ENCODE measurements at regions of chr16 and their contacts with region 1.

Region 1: GRCh38 chr16:49407873-49408550 is 34.4 kb downstream of the C16orf78 start:
- DNase-seq: peak; percentile 81 to 90 (median 87)
- ATAC-seq: peak; percentile 95 to 99 (median 98)
- H3K4me3 ChIP-seq: no peak overlapping the region
- H3K27ac ChIP-seq: no peak overlapping the region
- H3K4me1 ChIP-seq: peaks cover 0 to 7% (median 0%) of the 10 kb centered on the region in 12 donors
- H3K27me3 ChIP-seq: no peaks in the 10 kb centered on the region
- CTCF ChIP-seq: peak; percentile 85 to 94 (median 91)
- POLR2A ChIP-seq: no peak

Region 2: GRCh38 chr16:49424961-49425360 is 16.9 kb after region 1 on chr16:
- intact Hi-C with region 1: loop called in 1 of 10 experiments (anchors 2 kb)
- DNase-seq: no peak
- ATAC-seq: no peak
- H3K4me3 ChIP-seq: no peak overlapping the region
- H3K27ac ChIP-seq: no peak overlapping the region
- H3K4me1 ChIP-seq: peaks cover 0 to 9% (median 0%) of the 10 kb centered on the region in 12 donors
- H3K27me3 ChIP-seq: peaks cover 0 to 3% (median 0%) of the 10 kb centered on the region in 9 donors
- CTCF ChIP-seq: no peak
- POLR2A ChIP-seq: no peak

Region 3: GRCh38 chr16:49464877-49465504 is 57.0 kb after region 1 on chr16:
- intact Hi-C with region 1: no loop called
- DNase-seq: peak in 2 of 5 donors; percentile 14 to 22
- ATAC-seq: peak in 3 of 4 donors; percentile 16 to 43 (median 39)
- H3K4me3 ChIP-seq: no peak overlapping the region
- H3K27ac ChIP-seq: no peak overlapping the region
- H3K4me1 ChIP-seq: no peaks in the 10 kb centered on the region
- H3K27me3 ChIP-seq: peaks cover 0 to 40% (median 10%) of the 10 kb centered on the region in 9 donors
- CTCF ChIP-seq: peak in 11 of 12 donors; percentile 20 to 52 (median 43)
- POLR2A ChIP-seq: no peak

Region 4: DNA sequence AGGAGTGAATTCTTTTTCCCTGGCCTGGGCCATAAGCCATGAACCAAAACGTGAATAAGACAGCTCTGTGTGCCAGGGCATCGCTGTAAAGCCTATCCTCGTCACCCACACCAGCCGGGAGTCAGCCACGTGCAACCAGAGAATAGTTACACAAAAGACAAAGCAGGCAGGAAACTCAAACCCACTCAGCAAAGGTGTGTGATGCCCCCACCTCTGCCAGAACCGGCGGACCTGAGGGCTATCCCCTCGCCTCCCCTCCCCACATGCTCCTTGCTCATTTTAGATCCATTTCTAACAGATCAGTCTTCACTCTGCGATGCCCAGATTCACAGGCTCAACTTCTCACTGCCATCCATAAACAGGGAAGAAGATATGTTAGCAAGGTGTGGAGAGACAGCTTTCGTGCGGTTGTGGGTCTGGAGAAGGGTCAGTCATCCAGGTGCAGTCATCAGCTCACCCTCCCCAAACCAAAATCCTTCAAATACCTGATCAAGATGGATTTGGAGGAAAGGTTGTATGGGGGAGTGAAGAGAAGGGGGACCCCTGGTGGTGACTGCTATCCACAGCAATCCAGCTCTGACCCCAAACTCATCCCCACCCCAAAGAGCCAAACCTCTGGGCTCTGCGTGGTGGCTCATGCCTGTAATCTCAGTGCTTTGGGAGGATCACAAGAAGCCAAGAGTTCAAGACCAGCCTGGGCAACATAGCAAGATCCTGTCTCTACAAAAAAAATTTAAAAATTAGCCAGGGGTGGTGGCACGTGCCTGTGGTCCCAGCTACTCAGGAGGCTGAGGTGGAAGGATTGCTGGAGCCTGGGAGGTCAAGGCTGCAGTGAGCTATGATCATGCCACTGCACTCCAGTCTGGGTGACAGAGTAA is 184.8 kb after region 1 on chr16:
- intact Hi-C with region 1: loop called (anchors 2 to 5 kb)
- DNase-seq: peak in 1 of 5 donors; percentile 28
- ATAC-seq: peak in 3 of 4 donors; percentile 49 to 58 (median 56)
- H3K4me3 ChIP-seq: no peak overlapping the region
- H3K27ac ChIP-seq: no peak overlapping the region
- H3K4me1 ChIP-seq: peaks cover 0 to 28% (median 11%) of the 10 kb centered on the region in 12 donors
- H3K27me3 ChIP-seq: peaks cover 0 to 2% (median 0%) of the 10 kb centered on the region in 9 donors
- CTCF ChIP-seq: peak; percentile 63 to 84 (median 75)
- POLR2A ChIP-seq: no peak

Region 5: DNA sequence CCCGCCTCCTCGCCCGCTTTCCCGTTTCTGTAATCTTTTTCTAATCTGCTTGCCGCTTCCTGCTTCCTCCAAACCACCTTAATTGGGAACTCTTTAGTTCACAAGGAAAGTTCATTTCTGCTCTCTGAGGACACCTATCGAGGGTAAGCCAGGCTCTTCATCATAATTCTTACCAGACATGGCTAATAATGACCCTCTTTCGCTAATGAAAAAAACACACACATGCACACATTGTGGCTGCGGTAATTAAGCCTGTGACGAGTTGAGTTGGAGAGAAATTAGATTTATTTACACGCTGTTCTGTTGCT is 347.3 kb after region 1 on chr16:
- intact Hi-C with region 1: loop called in 1 of 10 experiments (anchors 5 kb)
- DNase-seq: peak in 1 of 5 donors; percentile 30
- ATAC-seq: peak; percentile 26 to 82 (median 64)
- H3K4me3 ChIP-seq: peak overlapping the region in 11 of 12 donors; percentile 19 to 55 (median 46)
- H3K27ac ChIP-seq: peak overlapping the region in 11 of 12 donors; percentile 52 to 92 (median 85)
- H3K4me1 ChIP-seq: peaks cover 0 to 45% (median 23%) of the 10 kb centered on the region in 12 donors
- H3K27me3 ChIP-seq: peaks cover 0 to 4% (median 0%) of the 10 kb centered on the region in 9 donors
- CTCF ChIP-seq: peak; percentile 19 to 72 (median 58)
- POLR2A ChIP-seq: no peak

Region 6: GRCh38 chr16:49921791-49922456 is 513.9 kb after region 1 on chr16:
- intact Hi-C with region 1: loop called (anchors 1 to 5 kb)
- DNase-seq: peak in 4 of 5 donors; percentile 36 to 62 (median 58)
- ATAC-seq: peak; percentile 60 to 85 (median 70)
- H3K4me3 ChIP-seq: no peak overlapping the region
- H3K27ac ChIP-seq: no peak overlapping the region
- H3K4me1 ChIP-seq: no peaks in the 10 kb centered on the region
- H3K27me3 ChIP-seq: peaks cover 0 to 5% (median 0%) of the 10 kb centered on the region in 9 donors
- CTCF ChIP-seq: peak; percentile 33 to 78 (median 64)
- POLR2A ChIP-seq: no peak

Measured in heart left ventricle (tissue), 16 donors.